OCI-LY7 (cell line): ENCODE measurements at regions of chr6 and their contacts with region 1.

Region 1: DNA sequence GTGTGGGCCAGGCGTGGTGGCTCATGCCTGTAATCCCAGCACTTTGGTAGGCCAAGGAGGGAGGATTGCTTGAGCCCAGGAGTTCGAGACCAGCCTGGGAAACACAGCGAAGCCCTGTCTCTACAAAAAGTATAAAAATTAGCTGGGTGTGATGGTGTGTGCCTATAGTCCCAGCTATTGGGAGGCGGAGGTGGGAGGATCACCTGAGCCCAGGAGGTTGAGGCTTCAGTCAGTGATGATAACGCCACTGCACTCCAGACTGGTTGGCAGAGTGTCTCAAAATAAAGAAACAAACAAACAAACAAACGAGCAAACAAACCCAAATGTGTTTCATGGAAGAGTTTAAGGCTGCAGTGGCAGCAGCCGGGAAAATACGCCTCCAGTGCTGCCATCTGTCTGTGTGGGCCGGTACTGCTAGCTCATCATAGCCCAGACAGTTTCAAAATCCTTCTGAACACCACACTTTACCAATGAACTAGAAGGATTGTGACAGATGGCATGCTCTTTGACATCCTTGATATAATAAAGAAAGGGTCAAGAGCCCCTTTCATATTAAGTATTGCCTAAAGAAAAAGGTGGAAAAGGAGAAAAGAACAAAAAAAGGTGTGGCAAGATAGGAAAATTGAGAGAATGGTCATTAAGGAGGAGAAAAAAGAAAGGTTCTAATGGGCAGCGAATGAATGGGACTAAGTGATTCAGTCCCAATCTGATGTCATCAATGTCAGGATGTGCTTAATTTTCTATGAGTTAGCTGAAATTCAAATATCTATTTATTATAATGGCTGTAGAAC is 298.6 kb downstream of the SYNE1 start:
- DNase-seq: peak; percentile 42
- H3K4me3 ChIP-seq: no peak overlapping the region
- H3K27ac ChIP-seq: no peak overlapping the region
- H3K4me1 ChIP-seq: no peaks in the 10 kb centered on the region
- CTCF ChIP-seq: peak; percentile 96

Region 2: DNA sequence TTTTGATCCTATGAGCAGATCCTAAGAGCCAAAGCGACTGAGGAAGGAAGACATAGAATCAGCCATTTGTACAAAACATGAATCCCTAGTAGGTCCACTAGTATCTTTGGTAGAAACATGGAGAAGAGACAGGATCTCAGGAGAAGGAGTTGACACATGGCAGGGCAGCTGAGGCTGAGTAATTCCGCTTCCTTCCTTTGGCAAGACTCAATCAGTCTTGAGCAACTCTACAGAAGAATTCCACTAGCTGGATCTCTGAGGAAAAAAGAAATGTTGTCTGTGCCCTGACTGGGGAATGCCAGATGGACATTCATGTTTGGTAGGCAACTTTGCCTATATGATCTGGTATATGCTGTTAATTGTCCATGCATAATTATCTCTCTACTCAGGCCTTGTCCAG is 495.7 kb before region 1 on chr6:
- CTCF ChIA-PET with region 1: no interaction called
- POLR2A ChIA-PET with region 1: no interaction called
- intact Hi-C with region 1: no loop called
- DNase-seq: no peak
- H3K4me3 ChIP-seq: no peak overlapping the region
- H3K27ac ChIP-seq: no peak overlapping the region
- H3K4me1 ChIP-seq: no peaks in the 10 kb centered on the region
- CTCF ChIP-seq: no peak

Region 3: DNA sequence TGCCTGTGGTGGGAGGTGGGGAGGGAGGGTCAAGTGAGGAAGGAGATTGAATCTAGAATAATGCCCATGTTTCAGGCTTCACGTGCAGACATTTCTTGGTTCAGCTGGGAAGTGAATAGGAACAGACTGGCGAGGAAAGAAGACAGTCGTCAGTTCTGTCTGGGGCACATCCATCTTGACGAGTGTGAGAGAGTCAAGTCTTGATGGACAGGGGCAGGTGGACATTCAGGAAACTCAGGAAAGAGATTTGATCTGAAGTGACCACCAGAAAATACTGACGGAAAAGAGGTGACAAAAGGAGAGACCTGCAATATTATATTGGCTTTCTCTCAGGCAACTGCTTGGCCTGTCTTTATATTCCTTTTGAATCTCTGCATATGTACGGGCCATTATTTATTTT is 462.4 kb before region 1 on chr6:
- CTCF ChIA-PET with region 1: no interaction called
- POLR2A ChIA-PET with region 1: no interaction called
- intact Hi-C with region 1: no loop called
- DNase-seq: no peak
- H3K4me3 ChIP-seq: no peak overlapping the region
- H3K27ac ChIP-seq: no peak overlapping the region
- H3K4me1 ChIP-seq: no peaks in the 10 kb centered on the region
- CTCF ChIP-seq: no peak

Region 4: GRCh38 chr6:152248980-152249379 is 89.5 kb before region 1 on chr6:
- CTCF ChIA-PET with region 1: no interaction called
- POLR2A ChIA-PET with region 1: no interaction called
- intact Hi-C with region 1: no loop called
- DNase-seq: no peak
- H3K4me3 ChIP-seq: no peak overlapping the region
- H3K27ac ChIP-seq: no peak overlapping the region
- H3K4me1 ChIP-seq: no peaks in the 10 kb centered on the region
- CTCF ChIP-seq: no peak

Region 5: DNA sequence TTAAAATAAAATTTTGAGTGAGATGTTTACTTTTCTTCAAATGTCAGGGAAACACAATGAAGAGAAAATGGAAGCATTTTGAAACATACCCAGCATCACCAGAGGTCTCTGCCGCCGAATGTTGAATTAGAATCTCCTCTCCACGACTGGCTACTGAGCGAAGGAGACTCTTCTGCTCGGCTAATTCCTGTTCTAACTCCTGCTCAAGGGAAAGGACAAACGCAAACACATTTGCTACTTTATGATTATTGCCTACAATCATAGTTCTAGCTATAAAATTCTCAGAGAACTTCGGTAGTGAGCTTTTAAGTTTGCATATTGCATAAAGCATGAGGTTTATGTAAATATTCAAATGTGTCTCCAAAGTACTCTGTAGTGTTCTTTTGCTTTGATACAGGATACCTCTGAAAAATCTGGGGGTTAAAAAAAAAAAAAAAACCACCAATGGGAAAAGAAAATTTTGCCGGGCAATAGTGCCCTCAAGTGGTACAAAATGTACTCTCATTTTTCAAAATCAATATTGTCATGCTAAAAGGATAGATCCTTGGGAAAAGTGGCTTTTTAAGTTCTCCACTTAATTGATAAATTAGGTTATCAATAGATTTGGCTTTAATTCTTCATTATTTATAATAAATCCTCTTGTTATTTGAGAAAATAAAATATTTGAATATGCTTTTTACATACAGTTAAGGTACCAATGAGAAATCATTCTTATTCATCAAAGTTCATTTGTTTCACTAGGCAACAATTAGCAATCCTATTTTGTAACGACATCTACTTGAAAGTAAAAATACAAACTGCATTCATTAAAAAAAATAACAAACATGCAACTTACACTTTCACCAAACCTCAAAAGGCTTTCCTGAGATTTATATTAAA is 70.3 kb before region 1 on chr6:
- CTCF ChIA-PET with region 1: no interaction called
- POLR2A ChIA-PET with region 1: no interaction called
- intact Hi-C with region 1: loop called (anchors 5 kb)
- DNase-seq: peak; percentile 46
- H3K4me3 ChIP-seq: no peak overlapping the region
- H3K27ac ChIP-seq: no peak overlapping the region
- H3K4me1 ChIP-seq: no peaks in the 10 kb centered on the region
- CTCF ChIP-seq: peak; percentile 89